Common myeloid progenitor, CD34-positive (primary cell): ENCODE measurements at regions of chr13 and their contacts with region 1.

Region 1: DNA sequence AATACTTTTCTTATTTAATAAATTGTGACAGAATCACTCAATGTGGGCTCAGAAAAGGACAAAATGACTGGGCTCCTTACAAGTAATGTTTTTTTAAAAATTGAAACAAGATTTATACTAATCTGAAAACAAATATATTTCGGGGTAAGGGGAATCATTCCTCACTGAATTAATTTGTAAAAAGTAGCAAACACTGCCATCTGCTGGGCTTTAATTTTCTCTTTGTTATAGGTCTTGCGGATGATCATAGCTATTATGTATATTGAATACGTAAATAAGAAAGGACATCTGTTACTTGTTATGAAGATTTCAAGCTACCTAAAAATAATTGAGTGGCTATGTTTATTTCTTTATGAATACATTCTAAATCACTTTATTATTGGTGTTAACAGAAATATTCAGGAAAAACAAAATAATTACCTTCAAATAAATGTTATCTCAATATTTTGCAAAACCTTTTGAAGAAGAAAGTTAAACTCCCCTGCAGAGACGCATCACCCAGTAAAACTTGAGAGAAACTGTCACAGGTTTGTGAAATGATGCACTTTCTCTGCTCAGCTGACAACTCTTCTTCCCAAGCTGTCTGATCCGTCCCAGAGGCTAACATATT is 17.8 kb upstream of the ENOX1 start:
- DNase-seq: peak; percentile 60 to 83 (median 75)
- H3K4me3 ChIP-seq: no peak overlapping the region
- H3K27ac ChIP-seq: no peak overlapping the region
- H3K4me1 ChIP-seq: peaks cover 0 to 2% (median 0%) of the 10 kb centered on the region in 4 experiments
- H3K27me3 ChIP-seq: peaks cover 0 to 2% (median 0%) of the 10 kb centered on the region in 5 experiments

Region 2: DNA sequence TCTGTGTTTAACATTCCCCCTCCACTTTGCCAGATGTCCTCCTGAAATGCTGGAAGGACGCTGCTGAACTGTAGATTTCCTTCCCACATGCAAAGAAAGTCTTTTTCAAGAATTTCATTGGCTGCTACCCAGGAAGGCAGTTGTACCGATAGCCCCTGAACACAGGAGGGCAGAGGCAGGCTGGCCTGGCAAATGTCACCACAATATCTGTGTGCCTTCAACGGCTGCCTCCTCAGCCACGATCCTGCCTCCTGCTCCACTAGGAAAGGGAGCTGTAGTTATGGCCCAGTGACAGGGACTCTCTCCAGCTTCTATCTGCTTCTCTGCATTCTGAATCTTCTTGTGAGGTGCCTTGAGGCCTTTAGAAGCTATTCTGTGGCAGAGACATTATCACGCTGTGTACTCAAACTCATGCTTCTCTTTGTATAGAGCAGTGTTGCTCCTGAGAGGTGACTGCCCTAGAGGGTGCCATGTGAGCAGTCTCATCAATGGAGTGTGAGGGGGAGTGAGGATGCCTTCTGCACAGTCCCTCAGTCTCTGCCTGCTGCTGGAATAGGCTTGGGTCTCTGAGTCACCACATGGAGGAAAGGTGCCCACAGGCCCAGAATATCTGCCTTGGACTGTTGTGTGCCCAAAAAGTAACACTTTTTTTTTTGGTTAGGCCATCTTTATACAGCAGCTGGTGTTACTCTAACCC is 501.4 kb before region 1 on chr13:
- CTCF ChIA-PET with region 1: interaction called, 14 read pairs
- POLR2A ChIA-PET with region 1: no interaction called
- DNase-seq: peak; percentile 70 to 82 (median 81)
- H3K4me3 ChIP-seq: no peak overlapping the region
- H3K27ac ChIP-seq: no peak overlapping the region
- H3K4me1 ChIP-seq: peaks cover 5 to 35% (median 28%) of the 10 kb centered on the region in 4 experiments
- H3K27me3 ChIP-seq: no peaks in the 10 kb centered on the region

Region 3: DNA sequence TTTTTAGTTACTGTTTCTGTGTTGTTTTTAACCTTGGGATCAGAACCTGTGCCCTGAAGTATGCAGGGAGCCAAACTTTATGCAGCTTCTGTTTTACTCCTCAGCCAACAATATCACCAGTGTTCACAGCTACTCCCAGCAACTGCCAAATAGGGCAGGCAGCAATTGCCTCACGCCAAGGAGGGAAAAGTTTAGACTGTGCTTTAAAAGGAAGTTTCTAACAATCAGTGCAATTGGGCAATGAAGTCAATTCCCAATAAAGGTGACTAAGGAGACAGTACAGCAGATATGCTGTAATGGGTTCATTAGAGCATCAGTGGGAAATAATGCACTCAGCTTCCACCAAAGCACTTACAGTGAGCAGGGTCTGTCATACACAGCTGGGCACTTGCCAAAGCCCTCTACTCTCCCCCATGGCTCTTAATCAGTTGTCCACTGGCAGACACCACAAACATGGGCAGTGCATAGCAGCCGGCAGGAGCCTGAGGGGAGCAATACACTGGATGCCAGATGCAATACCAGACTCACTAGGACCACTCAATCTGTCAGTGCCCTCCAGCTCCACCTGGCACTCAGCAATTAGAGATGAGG is 37.1 kb before region 1 on chr13:
- CTCF ChIA-PET with region 1: no interaction called
- POLR2A ChIA-PET with region 1: no interaction called
- DNase-seq: no peak
- H3K4me3 ChIP-seq: no peak overlapping the region
- H3K27ac ChIP-seq: no peak overlapping the region
- H3K4me1 ChIP-seq: no peaks in the 10 kb centered on the region
- H3K27me3 ChIP-seq: peaks cover 0 to 2% (median 0%) of the 10 kb centered on the region in 5 experiments

Region 4: DNA sequence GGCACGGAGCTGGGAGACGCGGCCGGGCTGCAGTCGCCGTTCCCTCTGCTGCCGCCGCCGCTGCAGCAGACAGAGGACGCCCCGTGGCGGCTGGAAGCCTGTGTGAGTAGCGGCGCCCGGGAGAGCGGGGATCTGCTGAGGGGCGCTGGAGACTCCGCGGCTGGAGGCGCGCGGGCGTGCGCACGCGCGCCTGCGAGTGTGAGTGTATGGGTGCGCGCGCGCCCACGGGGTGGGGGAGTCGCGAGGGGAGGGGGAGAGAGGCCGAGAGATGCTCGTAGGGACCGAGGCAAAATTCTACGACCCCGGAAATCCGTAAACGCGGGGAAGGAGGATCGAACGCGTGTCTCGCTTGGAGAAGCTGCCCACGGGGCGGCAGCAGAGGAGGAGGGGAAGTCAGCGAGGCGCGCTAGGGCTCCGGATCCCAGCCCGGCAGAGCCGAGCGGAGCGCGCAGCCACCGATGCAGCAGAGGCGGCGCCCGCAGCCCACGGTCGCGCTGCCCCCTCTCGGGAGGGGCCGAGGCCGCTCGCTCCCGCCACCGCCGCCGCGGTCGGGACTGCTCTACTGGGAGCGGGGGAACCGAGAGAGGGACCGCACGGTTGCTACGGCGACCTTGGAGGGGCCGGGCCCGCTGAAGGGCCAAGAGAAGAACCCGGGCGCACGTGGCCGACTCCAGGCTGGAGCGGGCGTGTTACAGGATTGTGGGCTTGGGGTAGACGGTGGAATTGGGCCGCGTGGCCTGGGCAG is 17.6 kb before region 1 on chr13 and contains the start of gene ENOX1:
- CTCF ChIA-PET with region 1: interaction called, 38 read pairs
- POLR2A ChIA-PET with region 1: no interaction called
- DNase-seq: peak; percentile 53 to 77 (median 71)
- H3K4me3 ChIP-seq: peak within 1 kb of the TSS; percentile 46 to 78 (median 67)
- H3K27ac ChIP-seq: no peak within 1 kb of the TSS
- H3K4me1 ChIP-seq: peaks cover 6 to 39% (median 26%) of the 10 kb centered on the region in 4 experiments
- H3K27me3 ChIP-seq: peaks cover 0 to 22% (median 7%) of the 10 kb centered on the region in 5 experiments

Region 5: DNA sequence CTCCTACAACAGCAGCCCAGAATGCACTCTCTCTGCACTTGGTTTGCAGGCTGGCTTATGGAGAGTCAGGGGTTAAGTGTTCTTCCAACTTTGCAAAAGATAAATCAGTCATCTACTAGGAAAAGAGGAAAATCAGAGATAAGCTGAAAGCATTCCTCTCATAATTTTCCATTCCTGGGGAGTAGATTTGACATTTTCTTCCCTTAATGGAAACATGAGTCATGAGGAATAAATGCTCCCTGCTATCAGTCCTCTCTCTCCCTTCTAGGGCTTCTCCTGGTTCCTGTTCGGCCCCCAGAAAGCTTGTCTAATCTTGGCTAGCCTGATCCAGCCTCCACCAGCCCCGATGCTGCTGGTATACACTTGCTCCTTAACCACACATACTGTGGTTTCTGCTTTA is 10.6 kb after region 1 on chr13:
- CTCF ChIA-PET with region 1: interaction called, 30 read pairs
- POLR2A ChIA-PET with region 1: no interaction called
- DNase-seq: no peak
- H3K4me3 ChIP-seq: no peak overlapping the region
- H3K27ac ChIP-seq: no peak overlapping the region
- H3K4me1 ChIP-seq: no peaks in the 10 kb centered on the region
- H3K27me3 ChIP-seq: no peaks in the 10 kb centered on the region